ENCODE measurements at regions of chr10 and their contacts with region 1.

Region 1: DNA sequence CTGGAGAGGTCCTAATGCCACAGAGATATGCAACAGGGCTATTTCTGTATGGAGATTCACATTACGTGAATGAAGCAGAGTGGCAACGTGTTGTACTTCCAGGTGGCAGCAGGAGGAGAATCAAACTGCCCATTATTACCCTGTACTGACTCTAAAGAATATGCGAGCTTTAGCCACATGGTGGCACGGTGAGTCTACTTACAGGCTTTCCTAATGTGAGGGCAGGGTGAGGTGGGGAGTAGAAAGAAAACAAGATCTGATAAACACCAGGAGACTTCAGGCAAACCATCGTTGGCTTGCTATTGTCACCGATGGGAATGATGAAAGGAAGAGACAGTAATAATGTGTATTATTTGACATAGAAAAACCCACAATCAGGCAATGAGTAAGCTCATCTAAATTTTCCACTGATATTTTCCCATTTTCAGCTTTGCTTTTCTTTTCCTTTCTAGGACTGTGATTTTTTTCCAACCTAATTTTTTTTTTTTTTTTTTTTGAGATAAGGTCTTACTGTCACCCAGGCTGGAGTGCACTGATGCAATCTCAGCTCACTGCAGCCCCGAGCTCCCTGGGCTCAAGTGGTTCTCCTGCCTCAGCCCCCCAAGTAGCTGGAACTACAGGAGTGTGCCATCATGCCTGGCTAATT is 164.3 kb downstream of the BTAF1 start:
- DNase-seq: peak in 1 of 2 donors; percentile 84
- H3K4me3 ChIP-seq: no peak overlapping the region
- H3K27ac ChIP-seq: peak overlapping the region in 1 of 2 donors; percentile 22
- H3K4me1 ChIP-seq: peaks cover 0 to 4% of the 10 kb centered on the region in 2 donors
- H3K27me3 ChIP-seq: no peaks in the 10 kb centered on the region
- CTCF ChIP-seq: peak; percentile 69 to 88 (median 87)

Region 2: GRCh38 chr10:92110039-92110794 is 22.3 kb after region 1 on chr10:
- intact Hi-C with region 1: no loop called
- DNase-seq: no peak
- H3K4me3 ChIP-seq: no peak overlapping the region
- H3K27ac ChIP-seq: peak overlapping the region in 1 of 2 donors; percentile 15
- H3K4me1 ChIP-seq: peaks cover 3 to 21% of the 10 kb centered on the region in 2 donors
- H3K27me3 ChIP-seq: no peaks in the 10 kb centered on the region
- CTCF ChIP-seq: no peak

Region 3: DNA sequence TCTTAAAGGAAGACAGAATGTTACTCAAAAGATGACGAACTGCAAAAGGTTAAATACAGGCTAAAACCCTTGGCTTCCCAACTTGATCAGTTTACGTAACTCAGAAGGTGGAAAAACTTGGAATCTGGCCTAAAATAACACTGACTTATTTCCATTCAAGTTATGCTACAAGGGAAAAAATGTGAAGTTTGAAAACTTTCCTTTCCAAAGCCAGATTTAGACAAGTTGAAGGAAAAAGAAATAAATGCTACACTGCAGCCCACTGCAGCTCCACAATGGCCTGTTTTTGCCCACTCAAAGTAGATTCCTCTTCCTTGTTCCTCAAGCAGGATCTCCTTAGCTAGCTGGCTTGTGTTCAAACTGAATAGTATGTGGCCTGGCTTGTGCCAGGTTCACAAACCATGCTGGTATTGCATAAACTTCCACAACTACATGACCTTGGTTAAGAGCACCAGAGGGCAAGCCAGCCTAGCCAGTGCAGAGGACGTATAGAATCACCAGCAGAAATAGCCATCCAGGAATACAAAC is 36.8 kb after region 1 on chr10:
- intact Hi-C with region 1: no loop called
- DNase-seq: peak in 1 of 2 donors; percentile 67
- H3K4me3 ChIP-seq: no peak overlapping the region
- H3K27ac ChIP-seq: peak overlapping the region; percentile 74 to 80
- H3K4me1 ChIP-seq: peaks cover 12 to 41% of the 10 kb centered on the region in 2 donors
- H3K27me3 ChIP-seq: no peaks in the 10 kb centered on the region
- CTCF ChIP-seq: no peak

Region 4: GRCh38 chr10:92184977-92185376 is 97.1 kb after region 1 on chr10:
- intact Hi-C with region 1: loop called (anchors 5 kb)
- DNase-seq: no peak
- H3K4me3 ChIP-seq: no peak overlapping the region
- H3K27ac ChIP-seq: no peak overlapping the region
- H3K4me1 ChIP-seq: peaks cover 0 to 3% of the 10 kb centered on the region in 2 donors
- H3K27me3 ChIP-seq: no peaks in the 10 kb centered on the region
- CTCF ChIP-seq: no peak

Region 5: GRCh38 chr10:92238586-92239098 is 150.8 kb after region 1 on chr10:
- intact Hi-C with region 1: no loop called
- DNase-seq: no peak
- H3K4me3 ChIP-seq: peak overlapping the region; percentile 70 to 73
- H3K27ac ChIP-seq: no peak overlapping the region
- H3K4me1 ChIP-seq: peaks cover 0 to 16% of the 10 kb centered on the region in 2 donors
- H3K27me3 ChIP-seq: no peaks in the 10 kb centered on the region
- CTCF ChIP-seq: no peak

Region 6: GRCh38 chr10:92290837-92291615 is 203.2 kb after region 1 on chr10 and contains the starts of genes CPEB3 and MARCHF5:
- intact Hi-C with region 1: loop called (anchors 1 kb)
- DNase-seq: peak; percentile 84 to 98
- H3K4me3 ChIP-seq: peak within 1 kb of the TSS; percentile 86 to 100
- H3K27ac ChIP-seq: peak within 1 kb of the TSS; percentile 90 to 98
- H3K4me1 ChIP-seq: peaks cover 0 to 3% of the 10 kb centered on the region in 2 donors
- H3K27me3 ChIP-seq: no peaks in the 10 kb centered on the region
- CTCF ChIP-seq: peak; percentile 61 to 89 (median 75)
- total RNA-seq, gene CPEB3: 2.8 TPM
- total RNA-seq, gene MARCHF5: 5.5 TPM

Region 7: GRCh38 chr10:92432596-92432995 is 344.7 kb after region 1 on chr10:
- intact Hi-C with region 1: loop called (anchors 2 kb)
- DNase-seq: no peak
- H3K4me3 ChIP-seq: no peak overlapping the region
- H3K27ac ChIP-seq: no peak overlapping the region
- H3K4me1 ChIP-seq: no peaks in the 10 kb centered on the region
- H3K27me3 ChIP-seq: no peaks in the 10 kb centered on the region
- CTCF ChIP-seq: no peak